Activated CD4-positive, alpha-beta T cell treated with anti-CD3 and anti-CD28 coated beads, Interleukin-2, amount 10 ng/mL, durations not matched to agents 24 days and 14 days (primary cell): ENCODE measurements at regions of chr17 and their contacts with region 1.

Region 1: GRCh38 chr17:42067351-42068091 is 17.1 kb upstream of the C17orf113 start:
- DNase-seq: peak; percentile 93
- H3K4me3 Mint-ChIP-seq: no peak overlapping the region
- H3K27ac Mint-ChIP-seq: no peak overlapping the region
- H3K4me1 Mint-ChIP-seq: peaks cover 18% of the 10 kb centered on the region
- H3K27me3 Mint-ChIP-seq: peaks cover 11% of the 10 kb centered on the region

Region 2: DNA sequence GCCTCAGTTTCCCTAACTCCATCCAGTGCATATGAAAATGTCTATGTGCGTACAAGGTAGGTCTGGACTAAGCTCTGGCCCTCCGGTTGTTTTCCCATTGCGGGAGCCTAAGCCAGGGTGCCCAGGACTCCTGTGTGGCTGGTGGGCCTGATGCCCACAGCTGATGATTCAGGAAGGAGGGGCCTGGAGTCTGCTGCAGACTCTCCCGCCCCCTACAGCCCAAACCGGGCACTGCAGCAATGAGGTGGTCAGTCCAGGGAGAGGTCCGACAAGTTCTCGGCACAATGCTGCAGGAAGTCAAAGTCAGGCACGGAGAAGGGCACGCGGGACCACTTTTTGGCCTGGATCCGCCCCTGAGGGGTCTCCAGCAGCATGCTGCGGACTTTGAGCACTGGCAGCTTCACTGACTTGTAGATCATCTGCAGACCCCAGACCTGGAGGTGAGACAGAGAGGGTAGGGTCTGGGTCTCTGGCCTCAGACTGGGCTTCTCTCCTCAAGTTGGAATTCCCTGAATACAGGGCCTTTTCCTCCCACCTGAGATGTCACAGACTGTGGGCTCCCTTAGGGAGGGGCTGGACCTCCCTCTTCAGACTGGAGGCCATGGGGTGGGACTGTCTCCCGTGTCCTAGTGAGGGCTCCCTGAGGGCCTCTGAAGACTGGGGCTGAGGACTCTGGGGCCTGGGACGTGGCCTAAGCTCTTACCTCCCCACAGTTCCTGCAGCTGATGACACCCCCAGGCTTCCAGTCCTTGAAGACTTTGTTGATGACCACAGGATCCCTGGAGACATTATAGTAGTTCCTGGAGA is 34.2 kb after region 1 on chr17:
- intact Hi-C with region 1: loop called (anchors 2 kb)
- DNase-seq: peak; percentile 91
- H3K4me3 Mint-ChIP-seq: no peak overlapping the region
- H3K27ac Mint-ChIP-seq: no peak overlapping the region
- H3K4me1 Mint-ChIP-seq: peaks cover 7% of the 10 kb centered on the region
- H3K27me3 Mint-ChIP-seq: peaks cover 16% of the 10 kb centered on the region

Region 3: GRCh38 chr17:42183741-42184711 is 116.5 kb after region 1 on chr17:
- intact Hi-C with region 1: loop called (anchors 10 kb)
- DNase-seq: peak; percentile 96
- H3K4me3 Mint-ChIP-seq: peak overlapping the region; percentile 89
- H3K27ac Mint-ChIP-seq: peak overlapping the region; percentile 93
- H3K4me1 Mint-ChIP-seq: peaks cover 34% of the 10 kb centered on the region
- H3K27me3 Mint-ChIP-seq: peaks cover 17% of the 10 kb centered on the region